H1 (cell line): ENCODE measurements at regions of chr10 and their contacts with region 1.

Region 1: GRCh38 chr10:93115661-93116383 is 42.1 kb downstream of the CYP26A1 start:
- DNase-seq: peak; percentile 53 to 94
- H3K4me3 ChIP-seq: no peak overlapping the region
- H3K27ac ChIP-seq: no peak overlapping the region; the same call in 1 of the 2 replicates
- H3K4me1 ChIP-seq: no peaks in the 10 kb centered on the region
- H3K27me3 ChIP-seq: peaks cover 0 to 2% (median 0%) of the 10 kb centered on the region in 4 experiments; a peak in 1 of 7 replicates
- CTCF ChIP-seq: peak; percentile 69 to 77 (median 72)
- EP300 ChIP-seq: no peak
- POLR2A ChIP-seq: no peak
- RAD21 ChIP-seq: peak; percentile 68 to 76

Region 2: GRCh38 chr10:93088466-93088865 is 27.4 kb before region 1 on chr10:
- CTCF ChIA-PET with region 1: interaction called, 16 read pairs
- POLR2A ChIA-PET with region 1: no interaction called
- DNase-seq: no peak
- H3K4me3 ChIP-seq: no peak overlapping the region
- H3K27ac ChIP-seq: no peak overlapping the region
- H3K4me1 ChIP-seq: peaks cover 2 to 5% (median 3%) of the 10 kb centered on the region in 4 experiments
- H3K27me3 ChIP-seq: no peaks in the 10 kb centered on the region; a peak in 1 of 7 replicates
- CTCF ChIP-seq: no peak
- EP300 ChIP-seq: no peak
- POLR2A ChIP-seq: no peak
- RAD21 ChIP-seq: no peak

Region 3: DNA sequence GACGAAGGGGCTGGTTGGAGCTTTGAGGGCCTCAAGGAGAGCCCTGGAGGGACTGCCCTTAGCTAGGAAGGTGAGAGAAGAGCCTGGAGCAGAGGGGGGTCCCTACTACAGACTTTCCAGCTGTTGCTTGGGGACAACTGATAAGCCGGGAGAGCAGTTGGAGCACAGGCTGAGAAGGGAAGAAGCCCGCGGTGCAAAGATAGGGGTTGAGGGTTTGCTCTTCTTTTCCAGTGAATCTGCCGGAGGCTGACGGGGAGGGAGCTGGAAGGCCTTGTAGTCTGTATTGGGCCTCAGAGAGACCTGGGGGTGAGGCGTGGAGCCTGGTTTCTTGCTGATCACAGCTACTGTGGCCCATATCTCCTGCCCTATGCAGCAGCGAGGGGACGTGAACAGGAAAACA is 18.4 kb before region 1 on chr10:
- CTCF ChIA-PET with region 1: interaction called, 10 read pairs
- POLR2A ChIA-PET with region 1: interaction called, 3 read pairs
- DNase-seq: no peak
- H3K4me3 ChIP-seq: no peak overlapping the region
- H3K27ac ChIP-seq: no peak overlapping the region
- H3K4me1 ChIP-seq: peaks cover 0 to 2% (median 0%) of the 10 kb centered on the region in 4 experiments; a peak in 1 of 7 replicates
- H3K27me3 ChIP-seq: no peaks in the 10 kb centered on the region
- CTCF ChIP-seq: no peak
- EP300 ChIP-seq: no peak
- POLR2A ChIP-seq: no peak
- RAD21 ChIP-seq: no peak

Region 4: GRCh38 chr10:93126484-93127052 is 10.7 kb after region 1 on chr10:
- CTCF ChIA-PET with region 1: interaction called, 20 read pairs
- POLR2A ChIA-PET with region 1: no interaction called
- DNase-seq: peak in 1 of 2 experiments; percentile 62
- H3K4me3 ChIP-seq: no peak overlapping the region
- H3K27ac ChIP-seq: no peak overlapping the region
- H3K4me1 ChIP-seq: no peaks in the 10 kb centered on the region
- H3K27me3 ChIP-seq: no peaks in the 10 kb centered on the region
- CTCF ChIP-seq: peak; percentile 43 to 80 (median 55); a peak in 3 of 4 replicates
- EP300 ChIP-seq: no peak
- POLR2A ChIP-seq: no peak
- RAD21 ChIP-seq: peak; percentile 62 to 69

Region 5: GRCh38 chr10:93288654-93289634 is 173.1 kb after region 1 on chr10:
- CTCF ChIA-PET with region 1: interaction called, 27 read pairs
- POLR2A ChIA-PET with region 1: no interaction called
- DNase-seq: peak; percentile 85
- H3K4me3 ChIP-seq: no peak overlapping the region; a peak in 1 of 8 replicates
- H3K27ac ChIP-seq: peak overlapping the region; percentile 52; the same call in 1 of the 2 replicates
- H3K4me1 ChIP-seq: peaks cover 0 to 11% (median 3%) of the 10 kb centered on the region in 4 experiments; a peak in 5 of 7 replicates
- H3K27me3 ChIP-seq: no peaks in the 10 kb centered on the region; a peak in 1 of 7 replicates
- CTCF ChIP-seq: peak; percentile 60 to 87 (median 86)
- EP300 ChIP-seq: peak in 1 of 2 experiments; percentile 45; a peak in 1 of 3 replicates
- POLR2A ChIP-seq: no peak
- RAD21 ChIP-seq: peak; percentile 97 to 98